H1 (cell line): ENCODE measurements at regions of chr17 and their contacts with region 1.

Region 1: GRCh38 chr17:43917348-43918018 is 10.1 kb upstream of the MPP2 start:
- DNase-seq: peak in 1 of 2 experiments; percentile 84
- H3K4me3 ChIP-seq: peak overlapping the region; percentile 16 to 52 (median 26); a peak in 5 of 8 replicates
- H3K27ac ChIP-seq: no peak overlapping the region
- H3K4me1 ChIP-seq: peaks cover 0 to 8% (median 6%) of the 10 kb centered on the region in 4 experiments; a peak in 5 of 7 replicates
- H3K27me3 ChIP-seq: peaks cover 0 to 9% (median 7%) of the 10 kb centered on the region in 4 experiments; a peak in 5 of 7 replicates
- CTCF ChIP-seq: peak; percentile 74 to 81 (median 79)
- EP300 ChIP-seq: no peak
- POLR2A ChIP-seq: no peak; a peak in 1 of 3 replicates
- RAD21 ChIP-seq: peak; percentile 57 to 68

Region 2: GRCh38 chr17:43673516-43674323 is 243.8 kb before region 1 on chr17:
- CTCF ChIA-PET with region 1: no interaction called
- POLR2A ChIA-PET with region 1: no interaction called
- DNase-seq: peak in 1 of 2 experiments; percentile 93
- H3K4me3 ChIP-seq: no peak overlapping the region
- H3K27ac ChIP-seq: no peak overlapping the region
- H3K4me1 ChIP-seq: peaks cover 0 to 20% (median 13%) of the 10 kb centered on the region in 4 experiments; a peak in 6 of 7 replicates
- H3K27me3 ChIP-seq: 0 out of 7 replicates have a peak, but pooled peaks cover 0 to 2% (median 0%) of the 10 kb centered on the region in 4 experiments
- CTCF ChIP-seq: peak; percentile 84 to 92 (median 91)
- EP300 ChIP-seq: no peak
- POLR2A ChIP-seq: no peak
- RAD21 ChIP-seq: peak; percentile 94 to 95

Region 3: DNA sequence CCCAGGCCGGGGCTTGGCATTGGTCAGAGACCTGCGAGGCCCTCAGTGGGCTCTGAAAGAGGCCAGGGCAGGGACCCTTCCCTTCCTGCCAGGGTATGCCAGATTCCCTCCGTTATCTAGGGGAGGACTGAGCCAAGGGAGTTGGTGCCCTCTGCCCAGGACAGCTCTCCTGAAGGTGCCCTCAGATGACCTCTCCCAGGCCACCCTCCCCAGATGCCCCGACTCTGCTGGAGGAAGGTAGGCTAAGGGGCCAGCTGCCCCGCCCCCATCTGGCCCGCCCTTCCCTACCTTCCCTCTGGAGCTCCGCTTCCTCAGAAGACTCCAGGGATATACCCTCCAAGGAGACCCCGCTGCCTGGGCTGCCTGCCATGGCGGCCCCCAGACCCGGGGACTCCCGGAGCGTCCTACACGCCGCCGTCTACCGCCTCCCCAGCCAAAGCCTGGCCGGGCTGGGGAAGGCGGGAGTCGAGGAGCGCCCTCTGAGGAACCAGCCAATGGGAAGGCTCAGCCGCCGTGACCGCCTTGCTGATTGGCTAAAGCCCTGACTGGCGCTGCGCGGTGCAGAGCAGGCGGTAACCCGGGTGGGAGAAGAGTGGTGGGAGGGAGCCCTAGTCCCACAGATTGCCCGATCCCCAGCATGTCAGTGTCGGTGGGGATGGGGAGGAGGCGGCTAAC is 17.2 kb before region 1 on chr17:
- CTCF ChIA-PET with region 1: interaction called, 44 read pairs
- POLR2A ChIA-PET with region 1: interaction called, 4 read pairs
- DNase-seq: peak in 1 of 2 experiments; percentile 95
- H3K4me3 ChIP-seq: peak overlapping the region; percentile 38 to 65 (median 48)
- H3K27ac ChIP-seq: no peak overlapping the region
- H3K4me1 ChIP-seq: peaks cover 0 to 39% (median 30%) of the 10 kb centered on the region in 4 experiments; a peak in 6 of 7 replicates
- H3K27me3 ChIP-seq: peaks cover 0 to 3% (median 3%) of the 10 kb centered on the region in 4 experiments; a peak in 4 of 7 replicates
- CTCF ChIP-seq: no peak
- EP300 ChIP-seq: no peak
- POLR2A ChIP-seq: no peak
- RAD21 ChIP-seq: no peak

Region 4: DNA sequence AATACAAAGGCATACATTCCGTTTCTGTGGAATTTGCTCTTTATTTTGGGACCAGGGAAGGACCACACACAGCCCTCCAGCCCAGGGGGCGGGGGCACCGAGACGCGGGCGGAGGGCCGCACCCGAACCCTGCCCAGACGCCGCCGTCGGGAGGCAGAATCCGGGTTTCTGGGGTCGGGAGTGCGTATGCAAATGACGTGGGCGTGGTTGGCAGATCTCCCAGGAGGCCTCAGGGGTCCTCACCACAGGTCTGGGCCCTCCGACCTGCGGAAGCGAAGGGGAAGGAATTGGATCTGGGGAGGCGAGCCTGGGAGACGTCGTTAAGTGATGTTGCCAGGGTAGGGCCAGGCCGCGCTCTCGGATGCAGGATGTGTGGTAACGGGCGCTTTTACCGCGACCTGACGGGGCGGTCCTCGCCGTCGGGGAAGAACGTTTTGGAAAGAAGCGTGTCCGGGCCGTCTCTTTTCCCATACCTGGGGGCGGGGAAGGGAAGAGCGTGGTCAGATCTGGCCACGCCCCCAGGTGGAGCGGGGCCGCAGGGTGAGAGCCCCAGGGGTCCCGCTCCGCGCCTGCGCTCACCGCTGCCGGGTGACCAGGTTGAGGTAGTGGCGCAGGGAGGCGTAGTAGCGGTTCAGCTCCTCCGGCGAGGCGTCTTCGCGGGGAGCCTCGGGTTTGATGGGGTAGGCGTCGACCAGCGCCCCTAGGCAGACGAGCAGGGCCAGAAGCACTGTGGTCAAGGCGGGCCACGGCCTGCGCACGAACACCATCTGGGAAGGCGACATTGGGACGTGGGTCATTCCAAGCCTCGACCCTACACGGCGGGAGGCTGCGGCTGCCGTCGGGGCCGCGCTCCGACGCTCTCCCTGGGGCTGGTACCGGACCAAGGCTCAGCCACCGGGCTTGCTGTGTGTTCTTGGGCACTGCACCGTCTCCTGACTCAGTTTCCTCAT is 35.5 kb after region 1 on chr17:
- CTCF ChIA-PET with region 1: interaction called, 106 read pairs
- POLR2A ChIA-PET with region 1: no interaction called
- DNase-seq: peak; percentile 66 to 93
- H3K4me3 ChIP-seq: peak overlapping the region; percentile 61 to 73 (median 70)
- H3K27ac ChIP-seq: peak overlapping the region; percentile 80
- H3K4me1 ChIP-seq: peaks cover 5 to 15% (median 12%) of the 10 kb centered on the region in 4 experiments
- H3K27me3 ChIP-seq: peaks cover 2 to 25% (median 18%) of the 10 kb centered on the region in 4 experiments; a peak in 6 of 7 replicates
- CTCF ChIP-seq: no peak
- EP300 ChIP-seq: no peak
- POLR2A ChIP-seq: peak in 1 of 2 experiments; percentile 75; a peak in 2 of 3 replicates
- RAD21 ChIP-seq: no peak

Region 5: DNA sequence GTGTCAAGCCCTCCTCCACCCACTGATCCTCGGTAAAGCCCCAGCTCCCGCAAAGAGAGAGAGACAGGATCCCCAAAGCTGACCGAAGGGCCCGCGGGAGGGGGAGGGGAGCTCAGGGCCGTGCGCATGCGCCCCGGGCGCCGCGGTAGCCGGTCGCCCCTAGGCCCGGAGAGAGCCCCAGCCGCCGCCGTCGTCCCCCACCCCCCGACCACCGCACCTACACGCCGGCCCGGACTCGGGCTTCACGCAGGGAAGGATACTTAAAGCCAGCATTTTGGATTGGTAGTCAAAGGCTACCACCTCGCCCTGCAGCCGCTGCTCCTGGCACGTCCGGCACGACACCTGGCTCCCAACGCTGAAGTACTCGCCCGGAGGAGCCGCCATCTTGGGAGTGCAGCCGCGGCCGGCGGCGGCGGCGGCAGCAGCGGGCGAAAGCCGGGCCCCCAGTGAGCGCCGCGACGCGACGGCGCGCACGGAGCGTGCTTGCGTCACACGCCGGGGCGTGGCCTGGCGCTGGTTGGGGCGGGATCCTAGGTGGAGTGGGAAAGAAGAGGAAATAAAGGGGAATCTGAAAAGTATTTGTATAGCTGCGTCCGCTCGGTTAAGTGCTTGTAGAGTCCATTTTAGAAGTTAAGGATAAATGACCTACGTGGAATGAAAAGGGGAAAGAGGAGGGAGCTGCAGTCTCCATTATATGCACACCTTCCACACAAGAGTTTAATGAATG is 148.9 kb after region 1 on chr17 and contains the start of gene LSM12:
- CTCF ChIA-PET with region 1: no interaction called
- POLR2A ChIA-PET with region 1: no interaction called
- DNase-seq: peak; percentile 75 to 98
- H3K4me3 ChIP-seq: peak within 1 kb of the TSS; percentile 89 to 99 (median 97)
- H3K27ac ChIP-seq: peak within 1 kb of the TSS; percentile 96
- H3K4me1 ChIP-seq: peaks cover 0 to 2% (median under 1%) of the 10 kb centered on the region in 4 experiments; a peak in 2 of 7 replicates
- H3K27me3 ChIP-seq: no peaks in the 10 kb centered on the region
- CTCF ChIP-seq: no peak; a peak in 1 of 4 replicates
- EP300 ChIP-seq: peak in 1 of 2 experiments; percentile 65; a peak in 1 of 3 replicates
- POLR2A ChIP-seq: peak; percentile 63 to 86
- RAD21 ChIP-seq: no peak
- total RNA-seq, gene LSM12: 118 and 142 TPM in 2 replicates